H1 (cell line): ENCODE measurements at regions of chr14 and their contacts with region 1.

Region 1: DNA sequence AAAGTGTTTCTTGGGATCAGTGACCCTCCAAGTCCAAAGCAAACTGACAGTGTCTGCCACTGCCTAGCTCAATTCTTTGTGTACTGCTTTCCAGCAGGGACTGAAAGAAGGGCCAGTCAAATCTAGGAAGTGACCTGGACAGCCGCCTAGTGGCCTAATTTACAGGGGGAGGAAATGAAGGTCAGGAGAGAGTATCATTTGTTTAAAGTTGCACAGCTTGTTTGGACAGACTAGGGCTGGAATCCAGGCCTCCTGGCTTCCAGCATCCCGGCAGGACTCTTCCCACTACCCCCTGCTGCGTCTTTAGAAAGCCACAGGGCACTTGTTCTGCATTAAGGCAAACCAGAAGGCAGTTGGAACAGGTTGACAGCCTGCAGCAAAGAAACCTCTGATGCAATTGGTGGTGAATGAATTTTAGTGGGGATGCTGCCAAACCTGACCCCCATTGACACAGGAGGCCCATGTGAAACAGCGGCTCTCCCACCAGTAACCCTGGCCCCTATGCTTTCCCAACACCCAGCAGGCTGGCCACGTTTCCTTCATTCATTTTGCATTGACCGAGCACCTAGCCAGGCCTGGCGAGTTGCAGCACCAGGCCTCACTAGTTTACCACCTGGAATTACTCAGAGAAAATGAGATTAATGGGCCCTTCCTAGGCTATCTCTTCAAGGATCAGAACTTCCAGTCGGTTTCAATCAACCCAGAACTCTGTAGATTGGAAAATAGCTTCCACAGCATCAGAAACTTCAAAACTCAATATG is 28.2 kb downstream of the GALNT16 start:
- DNase-seq: peak in 1 of 2 experiments; percentile 46
- H3K4me3 ChIP-seq: no peak overlapping the region
- H3K27ac ChIP-seq: no peak overlapping the region
- H3K4me1 ChIP-seq: peaks cover 0 to 5% (median 2%) of the 10 kb centered on the region in 4 experiments; a peak in 4 of 7 replicates
- H3K27me3 ChIP-seq: no peaks in the 10 kb centered on the region; a peak in 1 of 7 replicates
- CTCF ChIP-seq: peak in 2 of 3 experiments; percentile 25 to 60; a peak in 2 of 4 replicates
- EP300 ChIP-seq: no peak
- POLR2A ChIP-seq: no peak
- RAD21 ChIP-seq: peak; percentile 19 to 28; a peak in 3 of 4 replicates

Region 2: DNA sequence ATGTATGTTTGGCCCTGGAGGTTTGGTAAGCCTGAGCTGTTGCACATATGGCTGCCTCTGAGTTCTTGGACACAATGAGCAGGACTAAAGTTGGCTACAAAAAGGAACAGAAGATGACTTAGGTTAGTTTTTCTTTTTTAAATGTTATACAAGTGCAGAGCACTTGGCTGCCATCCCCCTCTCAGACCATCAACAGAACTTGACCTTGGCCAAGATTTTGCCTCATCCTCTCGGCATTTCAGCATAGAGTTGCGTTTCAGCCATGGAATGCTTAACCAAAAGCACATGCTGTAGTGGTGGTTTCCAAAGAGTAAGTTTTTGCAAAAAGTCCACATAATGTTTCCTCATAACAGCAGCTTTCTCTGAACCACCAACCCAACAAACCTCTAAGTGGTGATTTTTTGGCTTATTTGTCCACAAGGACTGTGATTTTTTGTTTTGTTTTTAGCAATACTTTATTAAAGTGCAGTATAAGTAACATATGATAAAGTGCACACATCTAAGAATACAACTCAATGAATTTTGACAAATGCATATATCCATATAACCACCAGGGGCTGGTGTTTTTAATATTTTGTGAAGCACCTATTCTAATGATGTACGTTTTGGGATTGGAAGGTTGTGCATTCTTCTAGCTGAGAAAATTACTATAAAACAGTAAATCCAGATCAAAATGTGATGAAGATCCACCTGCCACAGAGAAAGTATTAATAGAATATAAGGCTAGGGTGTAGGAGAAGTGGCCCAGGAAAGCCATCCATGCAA is 40.3 kb before region 1 on chr14:
- CTCF ChIA-PET with region 1: interaction called, 14 read pairs
- POLR2A ChIA-PET with region 1: no interaction called
- DNase-seq: no peak
- H3K4me3 ChIP-seq: no peak overlapping the region
- H3K27ac ChIP-seq: no peak overlapping the region
- H3K4me1 ChIP-seq: no peaks in the 10 kb centered on the region; a peak in 1 of 7 replicates
- H3K27me3 ChIP-seq: no peaks in the 10 kb centered on the region
- CTCF ChIP-seq: no peak
- EP300 ChIP-seq: no peak
- POLR2A ChIP-seq: no peak
- RAD21 ChIP-seq: no peak

Region 3: GRCh38 chr14:69299286-69300035 is 11.3 kb after region 1 on chr14:
- CTCF ChIA-PET with region 1: interaction called, 63 read pairs
- POLR2A ChIA-PET with region 1: interaction called, 3 read pairs
- DNase-seq: peak in 1 of 2 experiments; percentile 55
- H3K4me3 ChIP-seq: no peak overlapping the region
- H3K27ac ChIP-seq: no peak overlapping the region
- H3K4me1 ChIP-seq: no peaks in the 10 kb centered on the region
- H3K27me3 ChIP-seq: no peaks in the 10 kb centered on the region
- CTCF ChIP-seq: peak; percentile 65 to 90 (median 86)
- EP300 ChIP-seq: no peak
- POLR2A ChIP-seq: no peak
- RAD21 ChIP-seq: peak; percentile 66 to 72

Region 4: DNA sequence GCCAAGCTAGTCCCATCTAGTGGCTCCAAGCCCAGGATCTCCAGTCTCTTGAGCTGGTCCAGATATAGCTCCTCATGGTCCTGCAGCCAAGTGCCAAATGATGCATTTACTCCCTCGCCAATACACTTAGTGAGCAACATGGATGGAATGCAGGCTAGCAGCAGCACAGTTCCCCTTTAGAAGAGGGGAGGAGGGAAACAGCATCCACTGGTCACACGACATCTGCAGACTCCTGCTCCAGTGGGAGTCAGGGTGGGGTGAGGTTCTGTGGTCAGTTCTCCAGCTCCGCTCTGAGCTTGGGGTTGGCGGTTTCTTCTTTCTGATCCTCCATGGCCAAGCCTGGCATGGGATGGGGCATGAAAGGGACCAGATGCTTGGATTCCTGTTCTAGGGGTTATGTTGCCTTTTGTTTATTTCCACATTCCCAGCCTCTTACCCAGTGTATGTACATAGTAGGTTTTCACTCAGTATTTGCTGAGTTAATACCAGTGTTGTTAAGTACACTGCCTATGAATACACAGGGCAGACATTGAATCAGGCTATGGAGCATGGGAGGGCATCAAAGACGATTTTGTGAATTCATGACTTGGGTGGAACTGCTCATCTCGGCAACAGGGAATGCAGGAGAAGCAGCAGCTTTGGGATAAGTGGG is 29.0 kb after region 1 on chr14:
- CTCF ChIA-PET with region 1: interaction called, 13 read pairs
- POLR2A ChIA-PET with region 1: no interaction called
- DNase-seq: peak in 1 of 2 experiments; percentile 31
- H3K4me3 ChIP-seq: no peak overlapping the region
- H3K27ac ChIP-seq: no peak overlapping the region
- H3K4me1 ChIP-seq: no peaks in the 10 kb centered on the region
- H3K27me3 ChIP-seq: no peaks in the 10 kb centered on the region
- CTCF ChIP-seq: no peak
- EP300 ChIP-seq: no peak
- POLR2A ChIP-seq: no peak
- RAD21 ChIP-seq: no peak